Natural killer cell (primary cell): ENCODE measurements at regions of chr17 and their contacts with region 1.

Region 1: DNA sequence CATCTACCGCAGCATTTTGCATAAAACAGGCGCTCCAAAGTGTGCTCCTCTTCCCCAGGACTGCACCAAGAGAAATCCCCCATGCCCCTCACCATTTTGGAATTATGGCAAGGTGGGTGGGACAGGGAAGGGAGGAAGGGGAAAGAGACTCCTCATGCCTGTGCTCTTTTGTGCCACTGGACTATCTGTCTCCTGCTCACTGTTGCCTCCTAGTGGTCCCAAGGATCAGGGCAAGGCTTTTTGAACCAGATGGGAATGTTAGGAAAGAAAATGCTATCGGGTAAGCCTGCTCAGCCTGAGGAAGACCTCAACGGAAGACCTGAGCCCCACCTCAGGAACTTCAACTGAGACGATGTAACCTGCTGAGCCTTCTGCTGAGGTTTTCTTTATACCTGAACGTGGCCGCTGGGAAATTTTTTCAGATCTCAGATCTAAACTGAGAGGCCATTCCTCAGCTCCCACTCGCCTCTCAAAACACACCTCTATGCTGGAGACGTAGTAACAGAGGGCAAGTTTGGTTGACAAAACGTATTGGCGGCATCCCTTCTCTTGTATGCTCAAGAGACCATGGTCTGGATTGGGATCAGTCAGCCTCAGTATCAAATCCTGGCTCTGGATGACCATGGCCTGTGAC is 58.3 kb downstream of the SPACA3 start:
- DNase-seq: peak; percentile 28 to 67
- ATAC-seq: peak in 2 of 3 donors; percentile 36 to 65
- H3K4me3 ChIP-seq: no peak overlapping the region
- H3K4me3 Mint-ChIP-seq: no peak overlapping the region
- H3K27ac ChIP-seq: no peak overlapping the region
- H3K27ac Mint-ChIP-seq: no peak overlapping the region
- H3K4me1 ChIP-seq: no peaks in the 10 kb centered on the region
- H3K4me1 Mint-ChIP-seq: no peaks in the 10 kb centered on the region
- H3K27me3 ChIP-seq: no peaks in the 10 kb centered on the region
- H3K27me3 Mint-ChIP-seq: peaks cover 16 to 22% of the 10 kb centered on the region in 2 donors
- CTCF ChIP-seq: peak; percentile 83

Region 2: GRCh38 chr17:32985050-32985756 is 64.7 kb before region 1 on chr17:
- intact Hi-C with region 1: loop called (anchors 10 kb)
- DNase-seq: no peak
- ATAC-seq: no peak
- H3K4me3 ChIP-seq: no peak overlapping the region
- H3K4me3 Mint-ChIP-seq: no peak overlapping the region
- H3K27ac ChIP-seq: no peak overlapping the region
- H3K27ac Mint-ChIP-seq: no peak overlapping the region
- H3K4me1 ChIP-seq: no peaks in the 10 kb centered on the region
- H3K4me1 Mint-ChIP-seq: no peaks in the 10 kb centered on the region
- H3K27me3 ChIP-seq: no peaks in the 10 kb centered on the region
- H3K27me3 Mint-ChIP-seq: peaks cover 11 to 22% of the 10 kb centered on the region in 2 donors
- CTCF ChIP-seq: no peak